B cell (primary cell): ENCODE measurements at regions of chr22 and their contacts with region 1.

Region 1: DNA sequence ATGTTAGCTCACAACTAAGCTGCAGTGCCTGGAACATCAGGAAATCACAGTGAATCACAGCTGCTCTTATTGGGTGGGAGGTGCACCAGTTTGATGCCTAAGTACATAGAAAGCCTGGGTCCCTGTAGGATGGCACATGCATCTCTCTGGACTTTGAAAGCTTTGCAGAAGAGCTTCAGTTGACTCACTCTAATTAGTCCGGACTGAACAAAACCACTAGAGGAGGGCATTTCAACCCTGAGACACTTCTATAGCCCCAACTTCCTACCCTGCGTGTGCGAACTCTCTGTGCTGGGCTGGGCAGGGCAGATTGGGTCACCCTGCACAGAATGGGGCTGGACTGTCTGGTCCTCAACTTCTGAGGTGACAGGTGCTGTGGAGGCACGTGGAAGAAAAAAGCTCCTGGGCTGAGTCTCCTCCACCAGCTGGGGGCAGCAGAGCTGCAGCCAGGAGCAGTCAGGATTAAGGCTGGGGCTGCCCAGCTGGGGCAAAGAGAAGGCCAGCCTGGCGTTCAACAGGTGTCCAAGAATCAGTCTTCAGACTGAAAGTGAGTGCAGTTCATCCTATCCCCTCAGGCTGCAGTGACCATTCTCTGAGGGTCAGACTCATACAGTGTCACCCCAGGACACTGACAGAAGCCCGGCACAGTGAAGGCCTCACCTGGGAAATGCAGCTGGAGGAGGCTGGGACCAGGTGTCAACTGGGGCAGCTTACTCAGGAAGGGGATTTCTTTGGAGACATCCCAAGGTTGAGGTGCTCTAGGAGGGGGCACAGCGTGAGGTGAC is 22.1 kb downstream of the GGTLC2 start:
- DNase-seq: peak; percentile 63
- ATAC-seq: peak; percentile 78
- H3K4me3 ChIP-seq: no peak overlapping the region
- H3K4me3 Mint-ChIP-seq: no peak overlapping the region
- H3K27ac ChIP-seq: no peak overlapping the region
- H3K27ac Mint-ChIP-seq: peak overlapping the region; percentile 6
- H3K4me1 ChIP-seq: peaks cover 6 to 18% of the 10 kb centered on the region in 2 donors
- H3K4me1 Mint-ChIP-seq: peaks cover 17% of the 10 kb centered on the region
- H3K27me3 ChIP-seq: peaks cover 0 to 2% (median 0%) of the 10 kb centered on the region in 4 experiments
- H3K27me3 Mint-ChIP-seq: peaks cover 3% of the 10 kb centered on the region
- CTCF ChIP-seq: peak; percentile 71

Region 2: GRCh38 chr22:22655452-22656290 is 10.8 kb before region 1 on chr22:
- CTCF ChIA-PET with region 1: interaction called, 28 read pairs
- POLR2A ChIA-PET with region 1: no interaction called
- intact Hi-C with region 1: no loop called
- DNase-seq: no peak
- ATAC-seq: no peak
- H3K4me3 ChIP-seq: no peak overlapping the region
- H3K4me3 Mint-ChIP-seq: no peak overlapping the region
- H3K27ac ChIP-seq: no peak overlapping the region
- H3K27ac Mint-ChIP-seq: peak overlapping the region; percentile 57
- H3K4me1 ChIP-seq: peaks cover 0 to 14% of the 10 kb centered on the region in 2 donors
- H3K4me1 Mint-ChIP-seq: peaks cover 22% of the 10 kb centered on the region
- H3K27me3 ChIP-seq: no peaks in the 10 kb centered on the region
- H3K27me3 Mint-ChIP-seq: no peaks in the 10 kb centered on the region
- CTCF ChIP-seq: no peak

Region 3: DNA sequence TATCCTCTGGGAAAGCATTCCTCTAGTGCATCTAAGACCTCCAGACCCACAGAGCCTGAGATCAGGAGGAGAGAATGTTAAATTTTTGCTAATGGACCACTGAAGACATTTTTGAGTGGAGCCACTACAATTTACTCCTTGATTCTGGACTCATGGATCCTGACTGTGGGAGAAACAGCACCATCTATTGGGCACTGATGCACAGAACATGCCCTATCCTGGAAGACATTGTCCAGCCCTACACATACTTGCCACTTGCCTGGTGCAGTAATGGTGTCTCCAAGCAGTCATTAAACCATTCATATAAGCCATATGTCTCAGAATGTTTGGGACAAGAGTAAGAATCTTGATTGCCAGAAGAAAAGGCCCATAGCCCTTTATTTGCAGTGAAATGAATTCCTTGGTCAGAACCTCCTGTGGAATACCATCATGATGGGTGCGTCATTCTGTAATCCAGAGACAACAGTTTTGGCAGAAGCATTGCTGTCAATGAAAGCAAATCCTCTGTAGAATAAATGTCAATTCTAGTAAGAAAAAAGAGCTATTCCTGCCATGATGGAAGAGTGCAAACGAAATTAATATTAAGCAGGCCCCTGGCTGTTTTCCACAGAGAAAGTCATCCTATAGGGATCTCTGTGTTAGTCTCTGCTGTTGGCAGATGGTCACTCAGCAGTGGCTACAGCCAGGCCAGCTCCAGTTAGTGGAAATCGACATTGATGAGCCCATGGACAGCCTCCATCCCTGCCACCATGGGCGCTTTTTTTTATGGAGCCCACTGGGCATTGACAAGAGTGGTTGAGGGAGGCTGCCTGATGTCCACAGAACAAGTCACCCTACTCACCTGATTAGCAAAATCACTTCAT is 21.4 kb after region 1 on chr22:
- CTCF ChIA-PET with region 1: interaction called, 31 read pairs
- POLR2A ChIA-PET with region 1: no interaction called
- intact Hi-C with region 1: no loop called
- DNase-seq: peak; percentile 36
- ATAC-seq: no peak
- H3K4me3 ChIP-seq: no peak overlapping the region
- H3K4me3 Mint-ChIP-seq: peak overlapping the region; percentile 78
- H3K27ac ChIP-seq: peak overlapping the region; percentile 11 to 52
- H3K27ac Mint-ChIP-seq: peak overlapping the region; percentile 81
- H3K4me1 ChIP-seq: peaks cover 46 to 56% of the 10 kb centered on the region in 2 donors
- H3K4me1 Mint-ChIP-seq: peaks cover 54% of the 10 kb centered on the region
- H3K27me3 ChIP-seq: no peaks in the 10 kb centered on the region
- H3K27me3 Mint-ChIP-seq: no peaks in the 10 kb centered on the region
- CTCF ChIP-seq: peak; percentile 47

Region 4: GRCh38 chr22:22702237-22703202 is 36.0 kb after region 1 on chr22:
- CTCF ChIA-PET with region 1: interaction called, 11 read pairs
- POLR2A ChIA-PET with region 1: no interaction called
- intact Hi-C with region 1: no loop called
- DNase-seq: peak; percentile 36
- ATAC-seq: no peak
- H3K4me3 ChIP-seq: no peak overlapping the region
- H3K4me3 Mint-ChIP-seq: no peak overlapping the region
- H3K27ac ChIP-seq: no peak overlapping the region
- H3K27ac Mint-ChIP-seq: no peak overlapping the region
- H3K4me1 ChIP-seq: peaks cover 11 to 17% of the 10 kb centered on the region in 2 donors
- H3K4me1 Mint-ChIP-seq: peaks cover 21% of the 10 kb centered on the region
- H3K27me3 ChIP-seq: no peaks in the 10 kb centered on the region
- H3K27me3 Mint-ChIP-seq: peaks cover 3% of the 10 kb centered on the region
- CTCF ChIP-seq: peak; percentile 30

Region 5: DNA sequence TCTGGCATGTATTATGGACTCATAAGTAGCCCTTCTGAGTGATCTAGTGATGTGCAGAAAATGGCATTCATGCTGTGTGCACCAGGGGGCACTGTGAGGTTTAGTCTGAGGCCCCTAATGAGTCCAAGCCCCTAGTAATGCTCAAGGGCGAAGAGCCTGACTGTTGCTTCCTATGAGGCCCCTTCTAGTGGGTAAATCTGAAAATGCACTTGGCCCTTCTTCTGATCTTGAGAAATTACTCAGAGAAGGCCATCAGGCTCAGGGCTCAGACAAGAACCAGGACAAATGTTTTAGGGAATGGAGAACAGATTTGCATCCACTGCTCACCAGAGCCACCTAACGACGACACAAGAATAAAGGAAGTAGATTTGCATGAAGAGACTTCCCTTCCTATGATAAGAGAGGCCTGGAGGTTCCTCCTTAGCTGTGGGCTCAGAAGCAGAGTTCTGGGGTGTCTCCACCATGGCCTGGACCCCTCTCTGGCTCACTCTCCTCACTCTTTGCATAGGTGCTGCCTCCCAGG is 53.8 kb after region 1 on chr22:
- CTCF ChIA-PET with region 1: interaction called, 10 read pairs
- POLR2A ChIA-PET with region 1: no interaction called
- intact Hi-C with region 1: no loop called
- DNase-seq: peak; percentile 86
- ATAC-seq: peak; percentile 79
- H3K4me3 ChIP-seq: peak overlapping the region in 4 of 5 experiments; percentile 32 to 47 (median 38)
- H3K4me3 Mint-ChIP-seq: peak overlapping the region; percentile 60
- H3K27ac ChIP-seq: peak overlapping the region; percentile 92 to 96
- H3K27ac Mint-ChIP-seq: peak overlapping the region; percentile 95
- H3K4me1 ChIP-seq: peaks cover 43% of the 10 kb centered on the region in 2 donors
- H3K4me1 Mint-ChIP-seq: peaks cover 52% of the 10 kb centered on the region
- H3K27me3 ChIP-seq: no peaks in the 10 kb centered on the region
- H3K27me3 Mint-ChIP-seq: no peaks in the 10 kb centered on the region
- CTCF ChIP-seq: peak; percentile 78

Region 6: DNA sequence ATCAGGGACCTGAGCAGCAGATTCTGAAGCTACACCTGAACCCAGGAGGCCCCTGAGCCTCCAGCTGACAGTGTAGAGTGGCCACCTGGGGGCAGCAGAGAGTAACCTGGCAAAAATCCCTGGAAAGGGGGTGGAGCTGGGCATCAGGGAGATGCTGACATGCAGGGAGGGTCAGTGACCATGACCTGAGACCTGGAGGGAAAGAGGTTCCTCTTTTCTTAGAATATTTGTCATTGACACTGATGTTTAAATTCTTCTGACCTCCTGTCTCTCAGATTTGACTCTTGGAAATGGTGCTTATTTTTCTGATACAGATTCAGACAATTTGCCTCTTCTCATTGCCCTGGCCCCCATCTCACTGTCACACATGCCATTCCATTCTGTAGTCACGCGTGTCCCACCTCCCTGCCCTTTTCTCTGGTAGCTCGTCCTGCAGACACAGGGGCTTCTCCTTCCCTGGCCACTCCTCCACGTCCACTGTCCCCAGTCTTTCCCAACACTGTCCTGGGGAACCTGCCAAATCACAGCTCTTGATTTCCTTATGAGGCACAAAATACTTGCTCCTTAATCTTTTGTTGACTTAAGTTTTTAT is 103.9 kb after region 1 on chr22:
- CTCF ChIA-PET with region 1: interaction called, 10 read pairs
- POLR2A ChIA-PET with region 1: no interaction called
- intact Hi-C with region 1: no loop called
- DNase-seq: peak; percentile 60
- ATAC-seq: no peak
- H3K4me3 ChIP-seq: no peak overlapping the region
- H3K4me3 Mint-ChIP-seq: no peak overlapping the region
- H3K27ac ChIP-seq: no peak overlapping the region
- H3K27ac Mint-ChIP-seq: peak overlapping the region; percentile 47
- H3K4me1 ChIP-seq: peaks cover 22 to 39% of the 10 kb centered on the region in 2 donors
- H3K4me1 Mint-ChIP-seq: peaks cover 32% of the 10 kb centered on the region
- H3K27me3 ChIP-seq: peaks cover 0 to 10% (median 3%) of the 10 kb centered on the region in 4 experiments
- H3K27me3 Mint-ChIP-seq: peaks cover 28% of the 10 kb centered on the region
- CTCF ChIP-seq: peak; percentile 67

Region 7: GRCh38 chr22:22842085-22842484 is 175.6 kb after region 1 on chr22:
- CTCF ChIA-PET with region 1: no interaction called
- POLR2A ChIA-PET with region 1: no interaction called
- intact Hi-C with region 1: no loop called
- DNase-seq: no peak
- ATAC-seq: no peak
- H3K4me3 ChIP-seq: no peak overlapping the region
- H3K4me3 Mint-ChIP-seq: no peak overlapping the region
- H3K27ac ChIP-seq: no peak overlapping the region
- H3K27ac Mint-ChIP-seq: no peak overlapping the region
- H3K4me1 ChIP-seq: peaks cover 12 to 16% of the 10 kb centered on the region in 2 donors
- H3K4me1 Mint-ChIP-seq: peaks cover 18% of the 10 kb centered on the region
- H3K27me3 ChIP-seq: no peaks in the 10 kb centered on the region
- H3K27me3 Mint-ChIP-seq: peaks cover 3% of the 10 kb centered on the region
- CTCF ChIP-seq: no peak